RWPE1 (cell line): ENCODE measurements at regions of chr15 and their contacts with region 1.

Region 1: GRCh38 chr15:42084460-42085235 is 9.7 kb downstream of the PLA2G4D start:
- DNase-seq: peak; percentile 93
- H3K27ac ChIP-seq: peak overlapping the region; percentile 55
- CTCF ChIP-seq: peak; percentile 99

Region 2: DNA sequence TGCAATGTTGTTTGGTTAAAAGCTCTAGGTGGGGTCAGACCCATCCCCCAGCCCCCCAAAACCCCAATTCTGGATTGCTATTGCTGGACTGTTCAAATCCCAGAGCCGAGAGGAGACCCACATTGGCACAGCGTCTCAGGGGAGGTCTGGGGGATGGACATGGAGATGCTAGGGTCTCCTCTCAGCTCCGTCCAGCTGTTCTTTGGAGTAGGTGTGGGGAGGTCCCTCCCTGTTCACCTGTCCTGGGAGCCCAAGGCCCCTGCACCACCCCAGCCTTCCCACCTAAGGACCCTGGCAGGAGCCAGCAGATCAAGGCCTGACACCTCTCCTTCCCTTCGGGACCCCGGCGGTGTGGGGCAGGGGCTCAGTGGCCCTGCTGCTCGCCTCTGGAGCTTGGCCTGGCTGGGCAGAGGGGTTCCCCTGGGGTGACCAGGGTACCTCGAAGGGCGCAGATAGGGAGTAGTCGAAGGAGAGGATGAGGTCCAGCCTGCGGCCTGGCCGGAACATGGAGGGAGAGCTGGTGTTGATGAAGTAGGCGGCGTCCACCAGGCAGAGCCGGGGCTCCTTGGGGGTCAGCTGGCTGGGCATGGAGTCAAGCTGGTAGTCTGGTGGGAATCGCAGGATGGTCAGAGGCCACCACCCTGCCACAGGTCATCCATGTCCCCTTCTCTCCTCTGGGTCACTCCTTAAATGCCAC is 14.2 kb before region 1 on chr15:
- CTCF ChIA-PET with region 1: interaction called, 15 read pairs
- POLR2A ChIA-PET with region 1: no interaction called
- DNase-seq: no peak
- H3K27ac ChIP-seq: no peak overlapping the region
- CTCF ChIP-seq: no peak

Region 3: GRCh38 chr15:42165106-42165505 is 80.5 kb after region 1 on chr15:
- CTCF ChIA-PET with region 1: no interaction called
- POLR2A ChIA-PET with region 1: no interaction called
- DNase-seq: no peak
- H3K27ac ChIP-seq: peak overlapping the region; percentile 33; the same call in 1 of the 2 replicates
- CTCF ChIP-seq: no peak